ENCODE measurements at regions of chr4 and their contacts with region 1.

Region 1: DNA sequence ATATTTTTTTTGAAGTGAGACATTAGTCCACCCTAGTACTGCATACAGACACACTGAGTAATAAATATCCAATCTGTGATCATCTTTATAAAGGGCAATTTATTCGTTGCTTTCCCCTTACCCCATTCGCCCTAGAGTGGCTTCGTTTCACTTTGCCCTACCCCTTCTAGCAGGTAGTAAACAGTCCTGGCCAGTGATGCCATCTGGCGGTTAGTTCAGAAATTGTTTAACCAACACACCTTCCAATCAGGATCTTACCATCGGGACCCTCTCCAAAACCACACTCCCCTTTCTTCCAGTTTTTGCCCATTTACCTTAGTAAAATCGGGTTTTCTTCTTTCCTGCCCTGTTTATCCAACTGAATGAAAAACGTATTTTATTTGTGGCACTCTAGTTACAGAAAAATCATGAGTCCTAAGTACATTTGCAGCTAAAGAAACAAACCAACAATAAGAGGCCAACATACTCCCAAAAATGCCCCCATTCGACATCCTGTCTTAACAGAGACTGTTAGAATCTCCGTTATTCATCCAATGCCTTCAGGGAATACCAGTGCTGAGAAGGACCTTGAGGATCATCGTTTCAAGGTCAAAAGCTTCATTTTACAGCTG is 2.2 kb downstream of the PPA2 start:
- DNase-seq: peak; percentile 68 to 78 (median 73)
- H3K4me3 ChIP-seq: peak overlapping the region in 1 of 2 donors; percentile 25
- H3K4me3 Mint-ChIP-seq: peak overlapping the region; percentile 69 to 99 (median 90)
- H3K27ac ChIP-seq: peak overlapping the region; percentile 97
- H3K27ac Mint-ChIP-seq: peak overlapping the region; percentile 1 to 99 (median 69)
- H3K4me1 ChIP-seq: peaks cover 35% of the 10 kb centered on the region
- H3K4me1 Mint-ChIP-seq: peaks cover 38 to 73% (median 56%) of the 10 kb centered on the region in 4 donors
- H3K27me3 ChIP-seq: no peaks in the 10 kb centered on the region
- H3K27me3 Mint-ChIP-seq: peaks cover 0 to 2% of the 10 kb centered on the region in 2 donors

Region 2: DNA sequence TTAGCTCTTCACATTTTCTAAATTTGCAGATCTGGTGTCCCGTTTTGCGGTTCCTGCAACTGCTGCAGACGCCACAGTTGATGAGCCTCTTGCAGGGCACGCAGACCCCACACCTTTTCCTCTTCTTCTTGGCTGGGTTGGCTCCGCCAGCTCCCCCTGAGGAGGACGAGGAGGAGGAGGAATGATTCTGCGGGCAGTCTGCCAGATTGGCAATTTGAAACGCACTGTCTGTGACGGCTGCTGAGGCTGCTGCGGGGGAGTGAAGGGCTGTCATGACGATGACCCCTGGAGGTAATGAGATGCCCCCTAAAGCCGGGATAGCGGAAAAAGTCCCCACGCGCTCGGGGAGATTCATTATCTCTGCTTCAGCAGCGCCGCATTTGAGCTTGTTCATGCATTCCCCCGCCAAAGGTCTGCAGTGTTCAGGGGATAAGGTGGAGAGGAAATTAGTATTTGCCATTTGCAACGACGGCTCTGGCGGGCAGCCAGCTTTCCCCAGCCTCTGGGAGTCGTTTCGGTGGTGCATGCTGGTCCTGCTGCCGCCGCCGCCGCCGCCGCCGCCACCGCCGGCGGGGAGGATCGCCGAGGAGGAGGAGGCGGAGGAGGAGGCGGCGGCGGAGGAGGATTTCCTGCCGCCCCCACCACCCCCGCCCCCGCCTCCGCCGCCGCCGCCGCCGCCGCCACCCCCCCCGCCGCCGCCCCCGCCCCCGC is 980.7 kb before region 1 on chr4:
- CTCF ChIA-PET with region 1: no interaction called
- POLR2A ChIA-PET with region 1: no interaction called
- intact Hi-C with region 1: loop called (anchors 10 kb)
- DNase-seq: peak; percentile 43 to 66 (median 50)
- H3K4me3 ChIP-seq: peak overlapping the region in 1 of 2 donors; percentile 46
- H3K4me3 Mint-ChIP-seq: peak overlapping the region; percentile 82 to 90 (median 86)
- H3K27ac ChIP-seq: no peak overlapping the region
- H3K27ac Mint-ChIP-seq: peak overlapping the region in 5 of 7 donors; percentile 42 to 93 (median 72)
- H3K4me1 ChIP-seq: peaks cover 25% of the 10 kb centered on the region
- H3K4me1 Mint-ChIP-seq: peaks cover 20 to 50% (median 37%) of the 10 kb centered on the region in 4 donors
- H3K27me3 ChIP-seq: no peaks in the 10 kb centered on the region
- H3K27me3 Mint-ChIP-seq: peaks cover 26 to 37% of the 10 kb centered on the region in 2 donors

Region 3: GRCh38 chr4:104930298-104930697 is 541.4 kb before region 1 on chr4:
- CTCF ChIA-PET with region 1: interaction called, 7 read pairs
- POLR2A ChIA-PET with region 1: interaction called, 9 read pairs
- intact Hi-C with region 1: loop called (anchors 1 kb)
- DNase-seq: no peak
- H3K4me3 ChIP-seq: no peak overlapping the region
- H3K4me3 Mint-ChIP-seq: peak overlapping the region in 6 of 8 donors; percentile 7 to 63 (median 28)
- H3K27ac ChIP-seq: no peak overlapping the region
- H3K27ac Mint-ChIP-seq: peak overlapping the region in 2 of 7 donors; percentile 28 to 30
- H3K4me1 ChIP-seq: peaks cover 21% of the 10 kb centered on the region
- H3K4me1 Mint-ChIP-seq: peaks cover 10 to 27% (median 20%) of the 10 kb centered on the region in 4 donors
- H3K27me3 ChIP-seq: no peaks in the 10 kb centered on the region
- H3K27me3 Mint-ChIP-seq: no peaks in the 10 kb centered on the region

Region 4: DNA sequence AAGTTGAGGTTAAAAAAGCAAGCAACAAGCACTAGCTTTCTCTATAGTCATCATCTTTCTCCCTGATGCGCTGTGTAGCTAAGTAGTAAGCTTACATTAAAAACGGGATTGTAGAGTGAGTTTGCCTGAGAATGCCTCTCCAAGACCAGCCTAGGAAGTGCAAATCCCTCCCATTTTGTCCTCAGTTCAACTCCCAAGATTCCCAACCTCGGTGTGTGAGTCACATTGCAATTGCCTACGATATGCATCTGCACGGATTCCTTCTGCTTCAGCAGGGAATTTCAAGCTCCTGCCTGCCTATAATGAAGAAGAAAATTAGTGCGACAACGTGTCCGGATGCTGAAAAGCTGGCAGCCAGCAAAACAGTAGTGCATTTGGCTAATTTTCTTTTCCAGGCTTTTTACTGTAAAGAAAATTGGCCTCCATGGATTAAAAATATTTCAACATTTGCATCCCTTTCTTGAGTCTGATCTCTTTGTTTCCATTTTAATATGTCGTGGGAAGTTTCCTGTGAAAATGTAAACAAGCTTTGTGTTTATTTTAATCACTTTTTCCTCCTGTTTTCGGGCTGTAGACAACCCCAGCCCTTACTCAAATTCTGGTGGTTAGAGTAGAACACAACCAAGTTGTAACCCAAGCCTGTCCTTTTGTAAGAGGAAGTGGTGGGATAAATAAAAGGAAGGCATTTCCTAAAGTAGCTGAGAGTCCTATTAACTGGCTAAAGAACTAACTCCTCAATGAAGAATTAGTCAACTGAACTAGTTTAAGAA is 383.4 kb before region 1 on chr4:
- CTCF ChIA-PET with region 1: no interaction called
- POLR2A ChIA-PET with region 1: no interaction called
- intact Hi-C with region 1: no loop called
- DNase-seq: no peak
- H3K4me3 ChIP-seq: no peak overlapping the region
- H3K4me3 Mint-ChIP-seq: no peak overlapping the region
- H3K27ac ChIP-seq: no peak overlapping the region
- H3K27ac Mint-ChIP-seq: no peak overlapping the region
- H3K4me1 ChIP-seq: no peaks in the 10 kb centered on the region
- H3K4me1 Mint-ChIP-seq: no peaks in the 10 kb centered on the region
- H3K27me3 ChIP-seq: no peaks in the 10 kb centered on the region
- H3K27me3 Mint-ChIP-seq: peaks cover 5% of the 10 kb centered on the region in 2 donors

Region 5: GRCh38 chr4:105146276-105147015 is 325.2 kb before region 1 on chr4 and contains the start of gene TET2:
- CTCF ChIA-PET with region 1: interaction called, 51 read pairs
- POLR2A ChIA-PET with region 1: interaction called, 28 read pairs
- intact Hi-C with region 1: loop called (anchors 1 kb)
- DNase-seq: peak; percentile 79 to 88 (median 83)
- H3K4me3 ChIP-seq: peak within 1 kb of the TSS; percentile 100
- H3K4me3 Mint-ChIP-seq: peak within 1 kb of the TSS; percentile 97 to 100 (median 100)
- H3K27ac ChIP-seq: peak within 1 kb of the TSS; percentile 81
- H3K27ac Mint-ChIP-seq: peak within 1 kb of the TSS; percentile 97 to 100 (median 99)
- H3K4me1 ChIP-seq: peaks cover 27% of the 10 kb centered on the region
- H3K4me1 Mint-ChIP-seq: peaks cover 22 to 53% (median 33%) of the 10 kb centered on the region in 4 donors
- H3K27me3 ChIP-seq: no peaks in the 10 kb centered on the region
- H3K27me3 Mint-ChIP-seq: no peaks in the 10 kb centered on the region
- total RNA-seq, gene TET2: 20.2 to 20.7 TPM

Region 6: GRCh38 chr4:105208561-105208960 is 263.1 kb before region 1 on chr4:
- CTCF ChIA-PET with region 1: no interaction called
- POLR2A ChIA-PET with region 1: no interaction called
- intact Hi-C with region 1: no loop called
- DNase-seq: no peak
- H3K4me3 ChIP-seq: no peak overlapping the region
- H3K4me3 Mint-ChIP-seq: no peak overlapping the region
- H3K27ac ChIP-seq: no peak overlapping the region
- H3K27ac Mint-ChIP-seq: no peak overlapping the region
- H3K4me1 ChIP-seq: no peaks in the 10 kb centered on the region
- H3K4me1 Mint-ChIP-seq: peaks cover 0 to 9% (median 6%) of the 10 kb centered on the region in 4 donors
- H3K27me3 ChIP-seq: no peaks in the 10 kb centered on the region
- H3K27me3 Mint-ChIP-seq: no peaks in the 10 kb centered on the region

Region 7: DNA sequence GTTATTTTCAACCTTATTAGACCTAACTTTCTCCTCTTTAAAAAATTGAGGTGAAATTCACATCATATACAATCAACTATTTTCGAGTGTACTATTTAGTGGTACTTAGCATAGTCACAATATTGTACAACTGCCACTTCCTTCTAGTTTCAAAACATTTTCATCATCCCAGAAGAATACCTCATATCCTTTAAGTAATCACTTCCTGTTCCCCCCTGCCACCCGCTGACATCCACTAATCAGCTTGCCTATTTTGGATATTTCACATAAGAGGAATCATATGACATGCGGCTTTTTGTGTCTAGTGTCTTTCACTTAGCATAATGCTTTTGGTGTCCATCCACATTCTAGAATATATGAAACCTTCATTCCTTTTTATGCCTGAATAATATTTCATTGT is 12.2 kb after region 1 on chr4:
- CTCF ChIA-PET with region 1: interaction called, 27 read pairs
- POLR2A ChIA-PET with region 1: no interaction called
- intact Hi-C with region 1: no loop called
- DNase-seq: no peak
- H3K4me3 ChIP-seq: no peak overlapping the region
- H3K4me3 Mint-ChIP-seq: no peak overlapping the region
- H3K27ac ChIP-seq: no peak overlapping the region
- H3K27ac Mint-ChIP-seq: no peak overlapping the region
- H3K4me1 ChIP-seq: no peaks in the 10 kb centered on the region
- H3K4me1 Mint-ChIP-seq: no peaks in the 10 kb centered on the region
- H3K27me3 ChIP-seq: no peaks in the 10 kb centered on the region
- H3K27me3 Mint-ChIP-seq: peaks cover 8 to 12% of the 10 kb centered on the region in 2 donors

Region 8: GRCh38 chr4:106315968-106316772 is 844.5 kb after region 1 on chr4 and contains the starts of genes AIMP1 and TBCK:
- CTCF ChIA-PET with region 1: no interaction called
- POLR2A ChIA-PET with region 1: interaction called, 3 read pairs
- intact Hi-C with region 1: loop called (anchors 10 kb)
- DNase-seq: peak; percentile 90 to 93 (median 92)
- H3K4me3 ChIP-seq: peak within 1 kb of the TSS; percentile 91 to 94
- H3K4me3 Mint-ChIP-seq: no peak within 1 kb of the TSS
- H3K27ac ChIP-seq: peak within 1 kb of the TSS; percentile 96
- H3K27ac Mint-ChIP-seq: no peak within 1 kb of the TSS
- H3K4me1 ChIP-seq: peaks cover 41% of the 10 kb centered on the region
- H3K4me1 Mint-ChIP-seq: peaks cover 22 to 44% (median 23%) of the 10 kb centered on the region in 4 donors
- H3K27me3 ChIP-seq: no peaks in the 10 kb centered on the region
- H3K27me3 Mint-ChIP-seq: no peaks in the 10 kb centered on the region
- total RNA-seq, gene AIMP1: 47.0 to 51.9 TPM
- total RNA-seq, gene TBCK: 61.3 to 62.3 TPM

Measured in CD4-positive, alpha-beta memory T cell (primary cell).